GM12878 (cell line): ENCODE measurements at regions of chr11 and their contacts with region 1.

Region 1: DNA sequence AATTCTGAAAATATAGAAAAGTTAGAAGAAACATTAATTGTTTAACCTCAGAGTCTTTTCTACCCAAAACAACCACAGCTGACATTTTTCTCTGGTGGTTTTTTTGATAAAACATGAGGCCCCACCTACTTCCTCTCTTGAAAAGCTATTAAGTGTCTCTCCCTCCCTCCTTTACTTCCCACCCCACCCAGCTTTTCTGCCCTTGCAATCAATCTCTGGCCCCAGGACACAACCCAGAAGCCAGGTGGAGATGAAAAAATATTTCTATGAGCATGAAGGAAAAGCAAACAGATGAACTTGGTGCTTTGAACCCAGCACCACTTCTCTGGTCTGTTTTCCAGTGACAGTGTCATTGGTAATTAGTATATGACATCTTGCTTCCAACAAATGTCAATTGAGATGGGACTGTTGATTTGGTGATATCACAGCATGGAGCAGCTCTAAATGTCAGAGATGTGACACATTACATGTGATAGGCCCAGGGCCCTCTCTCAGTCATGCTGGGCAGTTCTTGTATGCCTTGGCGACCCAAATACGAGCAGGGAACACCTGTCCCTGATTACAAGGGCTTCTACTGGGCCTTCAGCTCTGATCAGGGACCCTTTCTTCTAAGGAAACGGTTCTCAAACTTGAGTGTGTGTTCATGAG is 23.9 kb upstream of the TMPRSS13 start:
- DNase-seq: no peak
- ATAC-seq: peak; percentile 30; the same call in 1 of the 3 replicates
- H3K4me3 ChIP-seq: no peak overlapping the region
- H3K27ac ChIP-seq: no peak overlapping the region
- H3K4me1 ChIP-seq: peaks cover 18% of the 10 kb centered on the region
- H3K27me3 ChIP-seq: no peaks in the 10 kb centered on the region
- CTCF ChIP-seq: no peak
- EP300 ChIP-seq: no peak
- POLR2A ChIP-seq: no peak
- RAD21 ChIP-seq: no peak

Region 2: GRCh38 chr11:117786135-117786890 is 166.8 kb before region 1 on chr11:
- CTCF ChIA-PET with region 1: no interaction called
- POLR2A ChIA-PET with region 1: no interaction called
- RAD21 ChIA-PET with region 1: no interaction called
- SMC1A ChIA-PET with region 1: no interaction called
- in situ Hi-C with region 1: no loop called
- intact Hi-C with region 1: no loop called
- DNase-seq: no peak
- ATAC-seq: peak; percentile 32; the same call in 2 of the 3 replicates
- H3K4me3 ChIP-seq: no peak overlapping the region
- H3K27ac ChIP-seq: no peak overlapping the region
- H3K4me1 ChIP-seq: no peaks in the 10 kb centered on the region
- H3K27me3 ChIP-seq: peaks cover 11 to 15% of the 10 kb centered on the region in 2 experiments; a peak in 3 of 4 replicates
- CTCF ChIP-seq: no peak
- EP300 ChIP-seq: no peak
- POLR2A ChIP-seq: no peak
- RAD21 ChIP-seq: no peak

Region 3: GRCh38 chr11:117970400-117971024 is 17.4 kb after region 1 on chr11:
- CTCF ChIA-PET with region 1: interaction called, 23 read pairs
- POLR2A ChIA-PET with region 1: interaction called, 5 read pairs
- RAD21 ChIA-PET with region 1: interaction called, 17 read pairs
- SMC1A ChIA-PET with region 1: interaction called, 17 read pairs
- in situ Hi-C with region 1: no loop called
- intact Hi-C with region 1: no loop called
- DNase-seq: no peak
- ATAC-seq: peak; percentile 77
- H3K4me3 ChIP-seq: no peak overlapping the region
- H3K27ac ChIP-seq: no peak overlapping the region
- H3K4me1 ChIP-seq: peaks cover 13% of the 10 kb centered on the region
- H3K27me3 ChIP-seq: no peaks in the 10 kb centered on the region
- CTCF ChIP-seq: no peak
- EP300 ChIP-seq: no peak
- POLR2A ChIP-seq: no peak
- RAD21 ChIP-seq: no peak

Region 4: GRCh38 chr11:117979481-117980211 is 26.5 kb after region 1 on chr11:
- CTCF ChIA-PET with region 1: interaction called, 15 read pairs
- POLR2A ChIA-PET with region 1: interaction called, 7 read pairs
- RAD21 ChIA-PET with region 1: interaction called, 55 read pairs
- SMC1A ChIA-PET with region 1: interaction called, 167 read pairs
- in situ Hi-C with region 1: no loop called
- intact Hi-C with region 1: no loop called
- DNase-seq: peak; percentile 82
- ATAC-seq: peak; percentile 91
- H3K4me3 ChIP-seq: no peak overlapping the region
- H3K27ac ChIP-seq: 0 out of 2 replicates have a peak overlapping the region, but pooled peaks have one; percentile 20
- H3K4me1 ChIP-seq: peaks cover 18% of the 10 kb centered on the region
- H3K27me3 ChIP-seq: no peaks in the 10 kb centered on the region
- CTCF ChIP-seq: no peak
- EP300 ChIP-seq: no peak
- POLR2A ChIP-seq: no peak
- RAD21 ChIP-seq: no peak